ENCODE measurements at regions of chr5 and their contacts with region 1.

Region 1: GRCh38 chr5:100890461-100891008 is 12.5 kb downstream of the ST8SIA4 start:
- DNase-seq: no peak
- H3K4me3 Mint-ChIP-seq: peak overlapping the region; percentile 80
- H3K27ac Mint-ChIP-seq: peak overlapping the region; percentile 92
- H3K4me1 Mint-ChIP-seq: peaks cover 51% of the 10 kb centered on the region
- H3K27me3 Mint-ChIP-seq: no peaks in the 10 kb centered on the region

Region 2: GRCh38 chr5:100777680-100778281 is 112.8 kb before region 1 on chr5:
- intact Hi-C with region 1: loop called (anchors 1 kb)
- DNase-seq: peak; percentile 63
- H3K4me3 Mint-ChIP-seq: peak overlapping the region; percentile 19
- H3K27ac Mint-ChIP-seq: peak overlapping the region; percentile 49
- H3K4me1 Mint-ChIP-seq: peaks cover 46% of the 10 kb centered on the region
- H3K27me3 Mint-ChIP-seq: no peaks in the 10 kb centered on the region

Region 3: GRCh38 chr5:100827481-100827889 is 63.0 kb before region 1 on chr5:
- intact Hi-C with region 1: loop called (anchors 2 kb)
- DNase-seq: no peak
- H3K4me3 Mint-ChIP-seq: no peak overlapping the region
- H3K27ac Mint-ChIP-seq: peak overlapping the region; percentile 45
- H3K4me1 Mint-ChIP-seq: peaks cover 30% of the 10 kb centered on the region
- H3K27me3 Mint-ChIP-seq: no peaks in the 10 kb centered on the region

Region 4: GRCh38 chr5:100840384-100840783 is 50.2 kb before region 1 on chr5:
- intact Hi-C with region 1: loop called (anchors 1 kb)
- DNase-seq: peak; percentile 76
- H3K4me3 Mint-ChIP-seq: peak overlapping the region; percentile 74
- H3K27ac Mint-ChIP-seq: peak overlapping the region; percentile 95
- H3K4me1 Mint-ChIP-seq: peaks cover 51% of the 10 kb centered on the region
- H3K27me3 Mint-ChIP-seq: no peaks in the 10 kb centered on the region

Region 5: DNA sequence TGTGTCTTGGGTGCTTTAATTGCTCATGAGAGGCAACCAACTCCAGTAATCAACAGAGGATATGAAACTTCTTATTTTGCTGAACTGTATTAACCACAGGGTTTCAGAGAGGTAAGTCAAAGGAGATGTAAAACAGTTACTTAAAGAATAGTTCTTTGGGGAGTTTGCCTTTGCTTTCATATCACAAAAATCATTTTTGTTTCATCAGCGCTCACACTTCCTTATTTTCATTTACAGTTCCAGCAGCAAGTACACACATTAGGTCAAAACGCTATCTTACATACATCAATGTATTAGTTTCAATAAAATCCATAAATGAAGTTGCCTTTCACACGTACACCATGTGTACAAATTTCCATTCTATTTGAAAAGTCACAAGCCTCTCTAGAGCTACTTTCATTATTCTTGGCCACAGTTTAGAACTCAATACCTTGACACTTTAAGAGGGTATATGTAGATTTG is 37.5 kb before region 1 on chr5:
- intact Hi-C with region 1: loop called (anchors 1 kb)
- DNase-seq: no peak
- H3K4me3 Mint-ChIP-seq: peak overlapping the region; percentile 73
- H3K27ac Mint-ChIP-seq: peak overlapping the region; percentile 89
- H3K4me1 Mint-ChIP-seq: peaks cover 31% of the 10 kb centered on the region
- H3K27me3 Mint-ChIP-seq: no peaks in the 10 kb centered on the region

Region 6: DNA sequence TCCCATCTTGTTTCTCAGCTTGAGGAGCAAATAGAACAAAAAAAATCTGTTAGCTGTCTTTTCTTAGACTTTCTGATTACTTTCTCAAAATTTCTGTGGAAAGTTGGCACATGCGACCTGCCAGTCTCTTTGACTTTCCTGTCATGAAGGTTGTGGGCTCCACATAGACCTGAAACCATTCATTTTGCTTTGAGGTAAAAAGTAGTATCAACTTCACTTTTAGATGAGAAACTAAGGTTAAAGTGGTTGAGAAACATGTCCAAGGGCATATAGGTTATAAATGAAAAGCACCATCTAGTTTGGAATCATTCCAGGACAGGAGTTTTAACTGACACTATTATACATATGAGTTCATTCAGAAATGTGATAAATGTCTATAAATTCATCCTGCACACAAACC is 30.1 kb before region 1 on chr5:
- intact Hi-C with region 1: loop called (anchors 1 kb)
- DNase-seq: no peak
- H3K4me3 Mint-ChIP-seq: peak overlapping the region; percentile 27
- H3K27ac Mint-ChIP-seq: peak overlapping the region; percentile 88
- H3K4me1 Mint-ChIP-seq: peaks cover 44% of the 10 kb centered on the region
- H3K27me3 Mint-ChIP-seq: no peaks in the 10 kb centered on the region

Region 7: DNA sequence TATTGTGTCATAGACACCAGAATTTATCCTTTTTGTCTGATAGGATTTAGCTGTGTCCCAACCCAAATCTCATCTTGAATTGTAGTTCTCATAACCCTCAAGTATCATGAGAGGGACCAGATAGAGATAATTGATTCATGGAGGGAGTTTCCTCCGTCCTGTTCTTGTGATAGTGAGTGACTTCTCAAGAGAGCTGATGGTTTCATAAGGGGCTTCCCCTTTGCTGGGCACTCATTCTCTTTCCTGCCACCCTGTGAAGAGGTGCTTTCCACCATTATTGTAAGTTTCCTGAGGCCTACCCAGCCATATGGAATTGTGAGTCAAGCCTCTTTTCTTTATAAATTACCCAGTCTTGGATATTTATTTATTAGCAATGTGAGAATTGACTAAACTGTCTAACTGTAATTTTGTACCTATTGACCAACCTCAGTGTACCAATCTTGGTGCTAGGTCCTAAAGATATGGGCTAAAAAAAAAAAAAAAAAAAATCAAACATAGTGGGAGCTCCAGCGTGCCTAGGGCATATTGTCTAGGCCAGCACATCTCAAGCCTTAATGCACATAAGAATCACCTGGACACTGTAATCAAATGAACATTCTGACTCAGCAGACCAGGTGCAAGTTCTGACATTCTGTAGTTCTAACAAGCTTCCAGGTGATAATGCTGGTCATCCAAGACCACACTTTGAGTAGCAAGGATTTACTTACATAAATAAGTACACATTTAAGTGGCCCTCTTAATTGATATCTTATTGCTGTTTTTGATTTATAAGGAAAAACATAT is 17.9 kb before region 1 on chr5:
- intact Hi-C with region 1: loop called (anchors 1 kb)
- DNase-seq: no peak
- H3K4me3 Mint-ChIP-seq: no peak overlapping the region
- H3K27ac Mint-ChIP-seq: peak overlapping the region; percentile 48
- H3K4me1 Mint-ChIP-seq: peaks cover 38% of the 10 kb centered on the region
- H3K27me3 Mint-ChIP-seq: no peaks in the 10 kb centered on the region